B cell (primary cell): ENCODE measurements at regions of chr1 and their contacts with region 1.

Region 1: GRCh38 chr1:185566995-185567394 is 167.2 kb upstream of the HMCN1 start:
- DNase-seq: peak; percentile 85
- ATAC-seq: peak; percentile 83
- H3K4me3 ChIP-seq: peak overlapping the region in 1 of 5 experiments; percentile 4
- H3K4me3 Mint-ChIP-seq: peak overlapping the region; percentile 68
- H3K27ac ChIP-seq: peak overlapping the region; percentile 62 to 72
- H3K27ac Mint-ChIP-seq: peak overlapping the region; percentile 84
- H3K4me1 ChIP-seq: peaks cover 13 to 28% of the 10 kb centered on the region in 2 donors
- H3K4me1 Mint-ChIP-seq: peaks cover 32% of the 10 kb centered on the region
- H3K27me3 ChIP-seq: no peaks in the 10 kb centered on the region
- H3K27me3 Mint-ChIP-seq: no peaks in the 10 kb centered on the region
- CTCF ChIP-seq: no peak

Region 2: GRCh38 chr1:185108321-185108720 is 458.7 kb before region 1 on chr1:
- CTCF ChIA-PET with region 1: no interaction called
- POLR2A ChIA-PET with region 1: no interaction called
- intact Hi-C with region 1: no loop called
- DNase-seq: no peak
- ATAC-seq: no peak
- H3K4me3 ChIP-seq: no peak overlapping the region
- H3K4me3 Mint-ChIP-seq: no peak overlapping the region
- H3K27ac ChIP-seq: no peak overlapping the region
- H3K27ac Mint-ChIP-seq: no peak overlapping the region
- H3K4me1 ChIP-seq: no peaks in the 10 kb centered on the region
- H3K4me1 Mint-ChIP-seq: no peaks in the 10 kb centered on the region
- H3K27me3 ChIP-seq: no peaks in the 10 kb centered on the region
- H3K27me3 Mint-ChIP-seq: no peaks in the 10 kb centered on the region
- CTCF ChIP-seq: no peak

Region 3: DNA sequence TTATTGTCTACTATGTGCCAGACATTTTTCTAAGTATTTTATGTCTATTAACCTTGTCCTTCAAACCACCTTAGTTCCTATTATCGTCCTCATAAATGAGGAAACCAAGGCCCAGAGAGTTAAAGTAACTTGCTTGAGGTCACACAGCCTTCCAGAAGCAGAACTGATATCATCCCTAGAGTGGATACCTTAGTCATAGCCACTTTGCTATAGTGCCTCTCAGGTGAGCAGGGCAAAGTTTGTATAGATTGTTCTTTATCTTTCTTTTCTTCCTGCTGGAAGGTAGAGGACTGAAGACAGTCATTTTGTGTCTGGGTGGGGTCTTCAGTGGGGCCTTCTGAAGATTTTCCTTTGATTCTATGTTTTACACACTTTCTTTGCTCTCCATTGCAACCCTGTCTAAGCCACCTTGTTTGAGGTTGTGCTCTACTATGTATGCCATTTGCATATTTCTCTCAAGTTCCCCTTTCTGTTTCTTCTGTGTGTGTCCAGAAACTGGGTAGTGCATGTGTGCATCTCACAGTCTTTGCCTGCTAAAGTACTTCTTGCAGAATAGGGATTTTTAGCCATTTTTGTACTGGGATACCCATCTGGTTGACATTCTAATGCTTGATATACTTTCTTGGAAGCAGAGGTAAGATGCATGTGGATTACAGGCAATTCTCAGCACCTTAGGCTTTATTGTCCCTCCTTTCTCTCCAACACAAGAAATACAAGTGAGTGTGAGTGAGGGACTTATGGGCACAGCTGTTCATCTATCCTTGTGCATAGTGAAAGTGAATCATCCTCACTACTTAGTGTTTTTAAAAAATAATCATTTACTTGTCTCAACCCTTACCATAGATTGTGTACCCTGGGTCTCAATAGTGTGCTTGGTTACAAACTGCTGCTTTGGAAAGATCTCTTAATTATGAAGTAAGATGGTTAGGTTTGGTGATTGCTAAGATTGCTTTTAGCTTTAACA is 40.4 kb before region 1 on chr1:
- CTCF ChIA-PET with region 1: no interaction called
- POLR2A ChIA-PET with region 1: no interaction called
- intact Hi-C with region 1: loop called (anchors 5 kb)
- DNase-seq: peak; percentile 71
- ATAC-seq: peak; percentile 98
- H3K4me3 ChIP-seq: no peak overlapping the region
- H3K4me3 Mint-ChIP-seq: peak overlapping the region; percentile 53
- H3K27ac ChIP-seq: peak overlapping the region; percentile 45 to 71
- H3K27ac Mint-ChIP-seq: peak overlapping the region; percentile 64
- H3K4me1 ChIP-seq: peaks cover 18 to 22% of the 10 kb centered on the region in 2 donors
- H3K4me1 Mint-ChIP-seq: peaks cover 19% of the 10 kb centered on the region
- H3K27me3 ChIP-seq: no peaks in the 10 kb centered on the region
- H3K27me3 Mint-ChIP-seq: no peaks in the 10 kb centered on the region
- CTCF ChIP-seq: no peak

Region 4: GRCh38 chr1:185608177-185608576 is 41.2 kb after region 1 on chr1:
- CTCF ChIA-PET with region 1: interaction called, 3 read pairs
- POLR2A ChIA-PET with region 1: no interaction called
- intact Hi-C with region 1: loop called (anchors 2 kb)
- DNase-seq: peak; percentile 71
- ATAC-seq: peak; percentile 70
- H3K4me3 ChIP-seq: peak overlapping the region in 1 of 5 experiments; percentile 1
- H3K4me3 Mint-ChIP-seq: peak overlapping the region; percentile 14
- H3K27ac ChIP-seq: no peak overlapping the region
- H3K27ac Mint-ChIP-seq: peak overlapping the region; percentile 28
- H3K4me1 ChIP-seq: peaks cover 40 to 45% of the 10 kb centered on the region in 2 donors
- H3K4me1 Mint-ChIP-seq: peaks cover 42% of the 10 kb centered on the region
- H3K27me3 ChIP-seq: no peaks in the 10 kb centered on the region
- H3K27me3 Mint-ChIP-seq: no peaks in the 10 kb centered on the region
- CTCF ChIP-seq: no peak